ENCODE measurements at regions of chr5 and their contacts with region 1.

Region 1: GRCh38 chr5:54610197-54610944 is 92.8 kb downstream of the SNX18 start:
- DNase-seq: peak; percentile 68
- H3K4me3 Mint-ChIP-seq: peak overlapping the region; percentile 53
- H3K27ac Mint-ChIP-seq: peak overlapping the region; percentile 99
- H3K4me1 Mint-ChIP-seq: peaks cover 31% of the 10 kb centered on the region
- H3K27me3 Mint-ChIP-seq: no peaks in the 10 kb centered on the region

Region 2: DNA sequence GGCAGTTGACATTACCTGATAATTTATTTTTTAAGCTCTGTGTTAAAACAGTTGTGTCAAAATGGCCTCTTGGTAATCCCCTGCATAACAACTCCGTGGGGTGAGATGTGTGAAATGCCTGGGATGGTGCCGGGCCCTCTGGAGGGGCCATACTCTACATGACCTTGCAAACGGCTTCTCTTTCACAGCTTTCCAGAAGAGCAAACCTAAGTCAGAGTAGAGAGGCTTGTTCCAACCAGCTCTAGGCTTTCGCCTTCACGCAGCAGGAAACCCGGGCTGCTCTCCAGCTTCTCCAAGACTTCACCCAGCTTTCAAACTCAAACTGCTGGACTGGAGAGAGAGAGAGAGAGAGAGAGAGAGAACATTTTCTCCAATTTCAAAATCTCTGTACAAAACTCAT is 27.3 kb after region 1 on chr5:
- CTCF ChIA-PET with region 1: interaction called, 5 read pairs
- POLR2A ChIA-PET with region 1: interaction called, 15 read pairs
- DNase-seq: no peak
- H3K4me3 Mint-ChIP-seq: no peak overlapping the region
- H3K27ac Mint-ChIP-seq: peak overlapping the region; percentile 35
- H3K4me1 Mint-ChIP-seq: peaks cover 20% of the 10 kb centered on the region
- H3K27me3 Mint-ChIP-seq: no peaks in the 10 kb centered on the region

Region 3: DNA sequence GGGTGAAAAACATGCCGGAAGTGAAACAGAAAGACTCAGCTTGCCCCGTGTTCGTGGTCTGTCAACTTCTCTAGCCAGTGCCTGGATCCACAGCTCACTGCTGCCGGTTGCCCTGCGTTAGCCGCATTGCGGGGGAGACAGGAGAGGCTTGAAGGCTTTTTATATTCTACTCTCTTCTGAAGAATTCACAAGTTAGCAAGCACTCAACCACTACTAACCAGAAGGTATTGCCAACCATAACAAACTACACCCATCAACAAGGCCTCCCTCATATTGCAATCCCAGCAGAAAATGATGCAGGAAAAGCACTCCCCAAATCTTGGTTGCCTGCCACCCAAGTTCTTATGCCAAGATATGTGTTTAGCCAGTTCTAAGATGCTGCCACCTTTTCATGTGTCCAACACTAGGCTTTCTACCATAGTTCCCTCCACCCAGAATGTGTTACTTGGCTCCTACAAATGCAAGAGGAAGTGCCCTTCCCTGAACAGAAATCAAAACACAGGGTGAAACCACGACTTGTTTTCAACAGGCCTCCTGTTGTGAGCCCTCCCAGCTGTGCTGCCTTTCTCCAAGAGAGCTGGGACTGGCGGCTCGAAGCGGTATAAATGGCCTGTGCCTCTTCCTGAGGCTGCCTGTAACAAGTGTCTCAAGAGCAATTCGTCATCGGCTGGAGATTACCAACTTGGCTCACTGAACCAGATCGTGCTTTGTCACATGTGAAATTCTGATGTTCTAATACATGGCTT is 36.2 kb after region 1 on chr5:
- CTCF ChIA-PET with region 1: interaction called, 7 read pairs
- POLR2A ChIA-PET with region 1: interaction called, 43 read pairs
- DNase-seq: peak; percentile 89
- H3K4me3 Mint-ChIP-seq: peak overlapping the region; percentile 59
- H3K27ac Mint-ChIP-seq: peak overlapping the region; percentile 99
- H3K4me1 Mint-ChIP-seq: peaks cover 55% of the 10 kb centered on the region
- H3K27me3 Mint-ChIP-seq: no peaks in the 10 kb centered on the region

Region 4: DNA sequence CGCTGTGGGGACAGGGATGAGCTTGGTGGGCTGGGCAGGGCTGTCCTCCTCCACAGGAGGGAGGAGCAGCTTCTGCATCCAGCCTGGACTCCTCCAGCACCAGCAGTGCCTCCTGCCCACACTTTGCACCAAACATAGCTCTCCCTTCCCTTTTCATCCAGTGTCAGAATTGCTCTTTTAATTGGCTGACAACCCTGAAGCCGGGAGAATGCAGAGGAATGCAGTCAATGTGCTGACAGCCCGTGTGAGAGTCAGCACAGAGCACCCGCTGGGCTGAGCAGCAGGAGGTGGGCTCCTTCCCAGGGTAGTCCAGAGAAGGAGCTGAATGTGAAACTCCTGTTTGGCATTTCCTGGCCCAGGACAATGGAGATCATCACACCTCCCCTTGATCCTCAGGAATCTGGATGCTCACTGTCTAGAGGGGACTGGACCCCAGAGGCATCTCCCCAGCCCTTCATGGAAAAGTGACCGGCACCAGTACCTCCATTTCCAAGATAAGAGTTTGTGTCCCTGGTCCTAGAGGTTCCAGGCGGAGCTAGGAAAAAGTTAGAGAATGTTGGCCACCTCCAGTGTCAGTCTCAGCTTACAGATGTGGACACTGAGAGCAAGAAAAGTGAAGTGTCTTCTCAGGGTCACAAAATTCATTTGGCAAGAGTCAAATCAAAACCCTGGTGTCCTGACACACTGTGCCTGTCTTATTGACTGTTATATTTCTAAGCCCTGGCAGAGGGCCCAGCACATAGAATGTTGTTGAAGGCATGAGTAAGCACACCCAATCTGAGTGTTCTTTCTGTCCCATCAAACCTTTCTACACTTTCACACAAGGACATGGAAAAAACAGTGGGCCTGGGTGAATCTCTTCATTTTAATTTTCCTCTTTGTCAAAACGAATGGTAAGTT is 109.3 kb after region 1 on chr5:
- CTCF ChIA-PET with region 1: no interaction called
- POLR2A ChIA-PET with region 1: interaction called, 11 read pairs
- DNase-seq: no peak
- H3K4me3 Mint-ChIP-seq: no peak overlapping the region
- H3K27ac Mint-ChIP-seq: peak overlapping the region; percentile 26
- H3K4me1 Mint-ChIP-seq: peaks cover 44% of the 10 kb centered on the region
- H3K27me3 Mint-ChIP-seq: no peaks in the 10 kb centered on the region

Region 5: GRCh38 chr5:54792611-54793404 is 182.4 kb after region 1 on chr5:
- CTCF ChIA-PET with region 1: no interaction called
- POLR2A ChIA-PET with region 1: interaction called, 13 read pairs
- DNase-seq: no peak
- H3K4me3 Mint-ChIP-seq: no peak overlapping the region
- H3K27ac Mint-ChIP-seq: peak overlapping the region; percentile 42
- H3K4me1 Mint-ChIP-seq: peaks cover 42% of the 10 kb centered on the region
- H3K27me3 Mint-ChIP-seq: peaks cover 13% of the 10 kb centered on the region

Region 6: DNA sequence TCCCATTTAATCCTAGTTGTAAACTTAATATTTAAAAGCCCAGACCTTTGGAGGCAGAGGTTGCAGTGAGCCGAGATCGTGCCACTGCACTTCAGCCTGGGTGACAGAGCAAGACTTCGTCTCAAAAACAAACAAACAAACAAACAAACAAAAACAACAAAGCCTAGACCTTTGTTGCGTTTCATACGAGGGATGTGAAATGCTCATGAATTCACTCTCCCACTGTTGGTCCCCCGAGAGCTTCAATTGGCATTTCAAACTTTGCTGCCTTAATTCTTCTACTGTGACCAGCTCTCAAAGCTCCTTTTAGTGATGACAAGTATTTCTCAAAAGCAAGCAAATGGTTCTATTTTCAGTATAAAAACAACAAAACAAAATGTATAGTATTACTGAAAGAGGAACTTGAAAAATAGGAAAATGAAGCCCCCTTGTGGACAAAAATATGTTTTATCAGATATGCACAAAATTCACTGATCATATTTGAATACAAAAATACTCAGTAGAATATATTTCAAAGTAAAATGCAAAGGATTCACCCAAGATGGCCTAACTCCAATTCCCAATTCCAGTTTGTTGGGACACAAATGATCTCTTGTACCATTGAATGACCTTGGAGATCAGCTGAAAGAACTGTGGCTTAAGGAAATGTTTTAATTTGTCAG is 234.7 kb after region 1 on chr5:
- CTCF ChIA-PET with region 1: interaction called, 11 read pairs
- POLR2A ChIA-PET with region 1: interaction called, 10 read pairs
- DNase-seq: no peak
- H3K4me3 Mint-ChIP-seq: no peak overlapping the region
- H3K27ac Mint-ChIP-seq: no peak overlapping the region
- H3K4me1 Mint-ChIP-seq: peaks cover 12% of the 10 kb centered on the region
- H3K27me3 Mint-ChIP-seq: peaks cover 18% of the 10 kb centered on the region